CD4-positive, alpha-beta memory T cell (primary cell): ENCODE measurements at regions of chr6 and their contacts with region 1.

Region 1: DNA sequence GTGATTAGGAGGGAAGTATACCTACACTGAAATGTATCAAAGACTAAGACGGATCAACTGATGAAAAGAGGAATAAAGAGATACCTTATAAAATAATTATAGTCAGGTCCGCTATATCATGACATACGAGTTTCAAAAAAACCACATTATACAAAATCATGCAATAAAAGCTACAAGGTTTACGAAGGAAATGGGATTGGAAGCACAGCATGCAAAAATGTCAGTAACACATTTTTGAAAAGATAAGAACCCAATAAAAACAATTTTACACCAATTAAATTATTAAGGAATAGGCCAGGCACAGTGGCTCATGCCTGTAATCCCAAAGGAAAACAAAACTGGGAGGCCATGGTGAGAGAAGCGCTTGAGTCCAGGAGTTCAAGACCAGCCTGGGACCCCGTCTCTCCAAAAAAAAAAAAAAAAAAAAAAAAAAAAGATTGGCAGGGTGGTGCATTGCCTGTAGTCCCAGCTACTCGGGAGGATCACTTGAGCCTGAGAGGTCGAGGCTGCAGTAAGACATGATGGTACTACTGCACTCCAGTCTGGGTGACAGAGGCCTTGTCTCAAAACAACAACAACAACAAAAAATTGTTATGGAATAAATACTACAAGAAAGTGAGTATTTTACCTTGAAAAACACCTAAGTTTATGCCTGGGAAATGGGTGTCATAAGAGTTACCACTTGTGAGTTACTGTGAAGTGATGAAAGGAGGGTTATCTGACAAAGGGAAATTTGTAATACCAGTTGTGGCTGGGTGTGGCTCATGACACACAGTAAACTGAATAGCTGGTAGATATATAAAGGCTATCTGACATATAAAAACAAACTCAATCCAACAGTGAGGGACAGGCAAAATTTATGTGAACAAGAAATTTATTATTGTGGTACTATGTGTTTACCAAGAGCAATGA is 45.2 kb downstream of the RANBP9 start:
- DNase-seq: no peak
- H3K4me3 ChIP-seq: no peak overlapping the region
- H3K4me3 Mint-ChIP-seq: peak overlapping the region in 6 of 8 donors; percentile 2 to 50 (median 42)
- H3K27ac ChIP-seq: no peak overlapping the region
- H3K27ac Mint-ChIP-seq: peak overlapping the region in 6 of 7 donors; percentile 1 to 84 (median 50)
- H3K4me1 ChIP-seq: peaks cover 88% of the 10 kb centered on the region
- H3K4me1 Mint-ChIP-seq: peaks cover 65 to 90% (median 81%) of the 10 kb centered on the region in 4 donors
- H3K27me3 ChIP-seq: no peaks in the 10 kb centered on the region
- H3K27me3 Mint-ChIP-seq: no peaks in the 10 kb centered on the region

Region 2: DNA sequence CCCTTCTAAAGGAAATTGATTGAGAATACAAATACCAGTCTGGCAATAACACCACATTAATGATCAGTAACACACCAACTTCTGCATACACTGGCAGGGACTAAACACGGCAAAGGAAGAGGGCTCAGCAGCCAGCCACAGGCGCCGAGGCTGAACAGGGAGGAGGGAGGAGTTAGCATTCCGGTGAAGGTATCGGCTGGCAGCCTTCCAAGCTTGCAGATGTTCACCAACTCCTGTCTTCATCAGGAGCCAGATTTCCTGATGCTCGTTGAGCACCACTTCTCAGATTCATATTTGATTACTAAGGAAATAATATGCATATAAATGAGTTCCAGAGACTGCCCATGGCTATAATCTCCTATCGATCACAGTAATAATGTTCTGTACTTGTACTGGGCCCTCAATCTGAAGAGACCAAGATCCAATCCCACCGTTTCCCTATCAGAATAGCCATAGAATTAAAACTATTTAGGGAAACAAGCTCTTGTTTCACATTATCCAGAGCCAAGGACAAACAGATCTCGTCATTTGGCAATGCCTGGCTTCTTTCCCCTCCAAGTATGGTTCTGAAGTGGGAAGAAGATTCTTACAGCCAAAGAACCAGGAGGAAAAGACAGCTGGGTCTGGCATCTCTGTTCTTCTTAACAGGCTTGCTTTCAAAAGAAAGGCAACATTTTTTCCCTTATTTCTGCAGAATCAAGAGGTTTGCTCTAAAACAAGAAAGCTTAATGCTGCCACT is 221.3 kb before region 1 on chr6:
- CTCF ChIA-PET with region 1: no interaction called
- POLR2A ChIA-PET with region 1: no interaction called
- intact Hi-C with region 1: no loop called
- DNase-seq: no peak
- H3K4me3 ChIP-seq: no peak overlapping the region
- H3K4me3 Mint-ChIP-seq: no peak overlapping the region
- H3K27ac ChIP-seq: no peak overlapping the region
- H3K27ac Mint-ChIP-seq: no peak overlapping the region
- H3K4me1 ChIP-seq: peaks cover 8% of the 10 kb centered on the region
- H3K4me1 Mint-ChIP-seq: peaks cover 11 to 21% (median 12%) of the 10 kb centered on the region in 4 donors
- H3K27me3 ChIP-seq: no peaks in the 10 kb centered on the region
- H3K27me3 Mint-ChIP-seq: peaks cover 0 to 2% of the 10 kb centered on the region in 2 donors

Region 3: GRCh38 chr6:13681305-13682061 is 15.0 kb after region 1 on chr6:
- CTCF ChIA-PET with region 1: interaction called, 4 read pairs
- POLR2A ChIA-PET with region 1: interaction called, 5 read pairs
- intact Hi-C with region 1: loop called (anchors 1 kb)
- DNase-seq: peak; percentile 46 to 82 (median 71)
- H3K4me3 ChIP-seq: peak overlapping the region in 1 of 2 donors; percentile 22
- H3K4me3 Mint-ChIP-seq: peak overlapping the region; percentile 63 to 88 (median 78)
- H3K27ac ChIP-seq: peak overlapping the region; percentile 44
- H3K27ac Mint-ChIP-seq: peak overlapping the region; percentile 85 to 96 (median 92)
- H3K4me1 ChIP-seq: peaks cover 77% of the 10 kb centered on the region
- H3K4me1 Mint-ChIP-seq: peaks cover 34 to 66% (median 50%) of the 10 kb centered on the region in 4 donors
- H3K27me3 ChIP-seq: no peaks in the 10 kb centered on the region
- H3K27me3 Mint-ChIP-seq: no peaks in the 10 kb centered on the region

Region 4: GRCh38 chr6:13696226-13696625 is 29.8 kb after region 1 on chr6:
- CTCF ChIA-PET with region 1: no interaction called
- POLR2A ChIA-PET with region 1: no interaction called
- intact Hi-C with region 1: loop called (anchors 5 kb)
- DNase-seq: no peak
- H3K4me3 ChIP-seq: no peak overlapping the region
- H3K4me3 Mint-ChIP-seq: peak overlapping the region in 4 of 8 donors; percentile 15 to 67 (median 38)
- H3K27ac ChIP-seq: peak overlapping the region; percentile 42
- H3K27ac Mint-ChIP-seq: peak overlapping the region; percentile 39 to 94 (median 86)
- H3K4me1 ChIP-seq: peaks cover 86% of the 10 kb centered on the region
- H3K4me1 Mint-ChIP-seq: peaks cover 53 to 78% (median 64%) of the 10 kb centered on the region in 4 donors
- H3K27me3 ChIP-seq: no peaks in the 10 kb centered on the region
- H3K27me3 Mint-ChIP-seq: no peaks in the 10 kb centered on the region

Region 5: GRCh38 chr6:13873285-13874190 is 207.1 kb after region 1 on chr6:
- CTCF ChIA-PET with region 1: no interaction called
- POLR2A ChIA-PET with region 1: no interaction called
- intact Hi-C with region 1: no loop called
- DNase-seq: peak; percentile 52 to 64 (median 56)
- H3K4me3 ChIP-seq: peak overlapping the region; percentile 15 to 60
- H3K4me3 Mint-ChIP-seq: peak overlapping the region; percentile 75 to 93 (median 88)
- H3K27ac ChIP-seq: no peak overlapping the region
- H3K27ac Mint-ChIP-seq: peak overlapping the region in 5 of 7 donors; percentile 11 to 69 (median 65)
- H3K4me1 ChIP-seq: peaks cover 13% of the 10 kb centered on the region
- H3K4me1 Mint-ChIP-seq: peaks cover 8 to 18% (median 9%) of the 10 kb centered on the region in 4 donors
- H3K27me3 ChIP-seq: no peaks in the 10 kb centered on the region
- H3K27me3 Mint-ChIP-seq: peaks cover 4 to 9% of the 10 kb centered on the region in 2 donors

Region 6: GRCh38 chr6:15137086-15137485 is 1470.6 kb after region 1 on chr6:
- CTCF ChIA-PET with region 1: no interaction called
- POLR2A ChIA-PET with region 1: no interaction called
- intact Hi-C with region 1: no loop called
- DNase-seq: no peak
- H3K4me3 ChIP-seq: no peak overlapping the region
- H3K4me3 Mint-ChIP-seq: no peak overlapping the region
- H3K27ac ChIP-seq: no peak overlapping the region
- H3K27ac Mint-ChIP-seq: no peak overlapping the region
- H3K4me1 ChIP-seq: no peaks in the 10 kb centered on the region
- H3K4me1 Mint-ChIP-seq: no peaks in the 10 kb centered on the region
- H3K27me3 ChIP-seq: no peaks in the 10 kb centered on the region
- H3K27me3 Mint-ChIP-seq: no peaks in the 10 kb centered on the region